HEK293 (cell line): ENCODE measurements at regions of chr7 and their contacts with region 1.

Region 1: DNA sequence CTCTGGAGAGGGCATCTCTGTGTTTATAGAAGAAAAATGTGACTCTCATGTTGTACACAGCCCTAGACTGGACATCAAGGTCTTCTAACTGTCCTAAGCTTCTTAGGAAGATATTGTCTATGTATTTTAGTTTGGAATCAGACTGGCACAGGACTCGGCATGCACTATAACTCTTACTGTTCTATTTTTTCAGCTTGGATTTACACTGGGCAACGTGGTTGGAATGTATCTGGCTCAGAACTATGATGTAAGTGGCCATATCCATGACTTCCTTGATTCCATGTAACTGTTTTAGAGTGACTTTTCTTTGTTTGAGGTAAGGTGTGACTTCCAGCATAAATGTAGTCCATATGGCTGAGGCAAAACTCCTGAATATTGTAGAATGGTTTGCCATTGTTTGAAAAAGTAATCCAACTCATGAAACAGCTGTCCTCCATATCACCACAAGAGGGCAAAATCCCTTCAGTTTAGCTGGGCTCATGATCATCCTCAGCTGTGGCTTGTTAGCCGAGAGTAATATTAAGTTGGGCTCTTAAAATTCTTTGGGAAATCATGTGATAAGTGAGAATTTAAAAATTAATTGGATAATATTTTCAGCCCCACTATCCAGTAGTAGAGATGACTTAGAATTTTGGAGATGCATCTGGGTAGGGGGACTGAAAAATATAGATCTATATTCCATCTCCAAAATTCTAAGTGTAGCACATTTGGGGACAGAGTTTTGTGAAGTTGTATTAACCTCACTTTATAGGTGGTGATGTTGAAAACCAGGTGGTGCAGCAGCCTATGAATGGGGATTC is 10.4 kb downstream of the STMP1 start:
- H3K4me3 ChIP-seq: no peak overlapping the region
- H3K27ac ChIP-seq: no peak overlapping the region
- H3K4me1 ChIP-seq: no peaks in the 10 kb centered on the region
- CTCF ChIP-seq: peak; percentile 36; the same call in 1 of the 2 replicates

Region 2: GRCh38 chr7:134854816-134855215 is 817.9 kb before region 1 on chr7:
- CTCF ChIA-PET with region 1: no interaction called
- POLR2A ChIA-PET with region 1: no interaction called
- H3K4me3 ChIP-seq: no peak overlapping the region
- H3K27ac ChIP-seq: no peak overlapping the region
- H3K4me1 ChIP-seq: no peaks in the 10 kb centered on the region
- CTCF ChIP-seq: no peak

Region 3: DNA sequence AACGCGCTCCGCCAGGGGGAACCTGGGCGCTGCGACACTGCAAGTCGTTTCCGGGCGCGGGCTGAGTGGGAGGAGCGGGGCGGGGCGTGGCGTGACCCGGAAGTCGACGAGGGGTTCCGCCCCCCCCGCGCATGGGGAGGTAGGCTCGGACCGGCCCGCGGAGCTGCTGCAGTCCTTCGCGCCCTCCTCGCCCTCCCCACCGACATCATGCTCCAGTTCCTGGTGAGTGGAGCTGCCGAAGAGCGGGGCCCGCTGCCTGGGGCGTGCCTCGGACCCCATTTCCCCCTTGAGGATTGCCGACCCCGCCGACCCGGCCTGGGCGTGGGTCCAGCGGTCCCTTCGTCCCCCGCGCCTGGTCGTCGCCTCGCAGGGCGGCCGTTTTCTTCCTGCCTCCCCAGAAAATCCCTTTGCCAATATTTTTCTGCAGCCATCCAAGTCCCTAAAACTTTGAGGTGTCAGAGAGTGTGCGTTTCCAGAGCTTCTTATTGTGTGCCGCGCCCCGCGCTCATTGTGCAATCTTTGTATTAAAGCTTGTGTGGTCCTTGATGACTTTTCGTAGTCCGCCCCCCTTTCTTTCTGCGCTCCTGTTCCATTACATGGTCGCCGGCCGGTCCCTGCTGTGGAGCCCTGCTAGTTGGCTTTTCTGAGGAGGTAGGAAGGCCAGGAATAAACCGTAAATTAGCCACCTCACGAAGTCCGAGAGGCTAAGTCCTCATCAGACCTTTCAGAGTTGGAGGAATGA is 10.2 kb before region 1 on chr7 and contains the start of gene STMP1:
- CTCF ChIA-PET with region 1: interaction called, 41 read pairs
- POLR2A ChIA-PET with region 1: interaction called, 7 read pairs
- H3K4me3 ChIP-seq: peak within 1 kb of the TSS; percentile 98
- H3K27ac ChIP-seq: peak within 1 kb of the TSS; percentile 59; the same call in 1 of the 2 replicates
- H3K4me1 ChIP-seq: no peaks in the 10 kb centered on the region
- CTCF ChIP-seq: peak; percentile 93

Region 4: GRCh38 chr7:135697276-135698049 is 24.7 kb after region 1 on chr7:
- CTCF ChIA-PET with region 1: interaction called, 16 read pairs
- POLR2A ChIA-PET with region 1: no interaction called
- H3K4me3 ChIP-seq: no peak overlapping the region
- H3K27ac ChIP-seq: no peak overlapping the region
- H3K4me1 ChIP-seq: no peaks in the 10 kb centered on the region
- CTCF ChIP-seq: no peak

Region 5: GRCh38 chr7:135710417-135711138 is 37.8 kb after region 1 on chr7:
- CTCF ChIA-PET with region 1: interaction called, 58 read pairs
- POLR2A ChIA-PET with region 1: no interaction called
- H3K4me3 ChIP-seq: no peak overlapping the region
- H3K27ac ChIP-seq: no peak overlapping the region
- H3K4me1 ChIP-seq: peaks cover under 1% of the 10 kb centered on the region; the same call in 1 of the 2 replicates
- CTCF ChIP-seq: no peak

Region 6: DNA sequence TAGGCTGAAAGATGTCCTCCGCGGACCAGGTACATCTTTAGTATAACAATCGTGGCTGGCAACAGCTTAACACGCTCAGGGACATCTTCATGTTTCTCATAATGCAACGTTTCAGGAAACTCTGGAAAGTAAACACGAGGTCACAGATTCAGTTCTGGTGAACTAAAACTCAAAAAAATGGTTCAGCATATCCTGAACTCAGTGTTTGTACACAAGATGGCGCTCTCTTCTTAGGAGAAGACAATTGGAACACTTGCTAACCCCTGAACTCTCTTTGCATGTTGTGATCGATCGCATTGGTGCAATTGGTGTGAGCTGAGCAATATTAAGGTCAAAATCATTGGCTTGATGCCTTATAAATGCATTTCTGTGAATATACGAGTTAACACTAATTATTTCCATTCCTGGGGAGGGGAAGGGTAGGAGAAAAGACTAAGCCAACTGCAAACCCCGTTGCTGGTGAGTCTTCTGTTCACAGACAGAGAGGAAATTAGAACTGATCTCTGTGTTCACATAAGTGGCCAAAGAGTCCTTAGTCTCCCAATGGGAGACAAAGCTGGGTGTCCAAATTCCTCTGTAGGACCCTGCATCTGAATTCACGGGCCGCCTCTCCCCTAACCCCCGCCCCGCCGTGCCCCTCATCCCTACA is 128.4 kb after region 1 on chr7:
- CTCF ChIA-PET with region 1: interaction called, 12 read pairs
- POLR2A ChIA-PET with region 1: no interaction called
- H3K4me3 ChIP-seq: no peak overlapping the region
- H3K27ac ChIP-seq: no peak overlapping the region
- H3K4me1 ChIP-seq: no peaks in the 10 kb centered on the region
- CTCF ChIP-seq: peak; percentile 83